ENCODE measurements at regions of chr13 and their contacts with region 1.

Region 1: DNA sequence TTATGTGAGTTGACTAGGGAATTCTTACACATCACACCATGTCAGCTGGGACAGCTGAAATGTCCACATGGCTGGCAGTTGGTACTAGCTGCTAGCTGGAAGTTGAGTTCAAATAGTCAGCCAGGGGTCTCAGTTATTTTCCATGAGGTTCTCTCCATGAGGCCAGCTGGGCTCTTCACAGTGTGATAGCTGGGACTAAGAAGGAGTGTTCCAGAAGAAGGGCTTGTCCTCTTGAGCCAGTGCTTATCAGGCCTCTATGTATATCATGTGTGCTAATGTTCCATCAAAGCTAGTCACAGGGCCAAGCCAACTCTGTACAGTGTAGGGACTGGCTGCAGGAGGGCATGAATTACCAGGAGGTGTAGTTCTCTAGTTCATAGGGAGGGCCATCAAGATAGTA is 11.8 kb downstream of the USPL1 start:
- DNase-seq: no peak
- H3K4me3 Mint-ChIP-seq: no peak overlapping the region
- H3K27ac Mint-ChIP-seq: no peak overlapping the region
- H3K4me1 Mint-ChIP-seq: peaks cover 31% of the 10 kb centered on the region
- H3K27me3 Mint-ChIP-seq: no peaks in the 10 kb centered on the region

Region 2: DNA sequence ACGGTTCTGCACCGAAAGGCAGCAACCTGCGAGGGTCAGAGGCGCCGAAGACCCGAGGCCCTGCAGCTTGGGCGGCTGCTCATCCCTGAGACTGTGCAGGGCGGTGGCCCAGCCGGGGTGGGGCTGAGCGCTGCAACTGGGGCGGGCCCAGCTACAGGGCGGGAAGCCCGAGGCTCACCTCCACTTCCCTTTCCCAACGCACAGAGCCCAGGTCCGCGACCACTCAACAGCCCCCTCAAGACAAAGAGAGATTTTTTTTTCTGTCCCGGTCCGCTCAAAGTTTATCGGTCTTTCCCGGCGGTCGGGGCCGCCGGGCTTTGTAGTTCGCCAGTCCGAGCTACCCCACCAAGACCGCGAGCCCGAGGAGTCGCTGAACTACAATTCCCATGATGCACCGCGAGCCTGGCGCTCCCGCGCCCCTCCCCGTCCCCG is 322.7 kb before region 1 on chr13:
- intact Hi-C with region 1: no loop called
- DNase-seq: peak; percentile 88
- H3K4me3 Mint-ChIP-seq: peak overlapping the region; percentile 86
- H3K27ac Mint-ChIP-seq: peak overlapping the region; percentile 80
- H3K4me1 Mint-ChIP-seq: peaks cover 38% of the 10 kb centered on the region
- H3K27me3 Mint-ChIP-seq: no peaks in the 10 kb centered on the region

Region 3: GRCh38 chr13:30654430-30654829 is 24.9 kb after region 1 on chr13:
- intact Hi-C with region 1: loop called (anchors 2 kb)
- DNase-seq: peak; percentile 56
- H3K4me3 Mint-ChIP-seq: peak overlapping the region; percentile 59
- H3K27ac Mint-ChIP-seq: peak overlapping the region; percentile 76
- H3K4me1 Mint-ChIP-seq: peaks cover 36% of the 10 kb centered on the region
- H3K27me3 Mint-ChIP-seq: no peaks in the 10 kb centered on the region

Measured in activated T-helper 2 cell treated with anti-CD3 and anti-CD28 coated beads, Interferon-gamma antibody, Interleukin-2, Interleukin-4, amounts not matched to agents 10 μg/mL and 5 μg/mL and 100 μg/mL, durations not matched to agents 14 hours and 24 hours and 36 hours (primary cell).